Naive thymus-derived CD4-positive, alpha-beta T cell (primary cell): ENCODE measurements at regions of chr3 and their contacts with region 1.

Region 1: GRCh38 chr3:18411541-18411940 is 13.6 kb downstream of the SATB1 start:
- DNase-seq: peak in 7 of 9 donors; percentile 46 to 80 (median 68)
- ATAC-seq: peak; percentile 83
- H3K4me3 ChIP-seq: peak overlapping the region; percentile 9
- H3K4me3 Mint-ChIP-seq: peak overlapping the region; percentile 46 to 88 (median 76)
- H3K27ac ChIP-seq: peak overlapping the region; percentile 55
- H3K27ac Mint-ChIP-seq: peak overlapping the region; percentile 75 to 97 (median 86)
- H3K4me1 ChIP-seq: peaks cover 13 to 87% of the 10 kb centered on the region in 2 donors
- H3K4me1 Mint-ChIP-seq: peaks cover 35 to 98% (median 89%) of the 10 kb centered on the region in 7 donors
- H3K27me3 ChIP-seq: no peaks in the 10 kb centered on the region
- H3K27me3 Mint-ChIP-seq: no peaks in the 10 kb centered on the region

Region 2: DNA sequence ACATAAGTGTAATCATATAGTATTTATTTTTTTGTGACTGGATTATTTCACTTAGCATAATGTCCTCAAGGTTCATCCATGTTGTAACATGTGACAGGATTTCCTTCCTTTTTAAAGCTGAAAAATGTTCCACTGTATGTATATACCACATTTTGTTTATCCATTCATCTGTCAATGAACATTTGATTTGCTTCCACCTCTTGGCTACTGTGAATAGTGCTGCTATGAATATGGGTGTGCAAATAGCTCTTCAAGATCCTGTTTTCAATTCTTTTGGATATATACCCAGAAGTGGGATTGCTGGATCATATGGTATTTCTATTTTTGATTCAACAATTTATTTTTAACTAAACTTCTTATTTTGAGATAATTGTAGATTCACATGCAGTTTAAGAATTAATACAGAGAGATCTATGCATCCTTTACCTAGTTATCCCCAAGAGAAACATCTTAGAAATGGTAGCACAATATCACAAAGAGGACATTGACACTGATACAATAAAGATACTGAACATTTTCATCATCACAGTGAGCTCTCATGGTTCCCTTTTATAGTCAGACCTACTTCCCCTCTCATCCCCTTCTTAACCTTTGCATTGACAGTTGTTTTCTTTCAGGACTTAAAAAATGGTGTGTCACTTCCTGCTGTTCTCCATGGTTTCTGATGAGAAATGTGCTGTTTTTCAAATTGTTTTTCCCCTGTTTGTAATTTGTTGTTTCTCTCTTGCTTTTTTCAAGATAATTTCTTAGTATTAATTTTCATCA is 76.5 kb before region 1 on chr3:
- CTCF ChIA-PET with region 1: no interaction called
- POLR2A ChIA-PET with region 1: no interaction called
- intact Hi-C with region 1: no loop called
- DNase-seq: no peak
- ATAC-seq: peak; percentile 56
- H3K4me3 ChIP-seq: no peak overlapping the region
- H3K4me3 Mint-ChIP-seq: peak overlapping the region in 2 of 10 donors; percentile 1 to 9
- H3K27ac ChIP-seq: no peak overlapping the region
- H3K27ac Mint-ChIP-seq: peak overlapping the region in 2 of 9 donors; percentile 1 to 67
- H3K4me1 ChIP-seq: no peaks in the 10 kb centered on the region
- H3K4me1 Mint-ChIP-seq: peaks cover 11 to 24% (median 16%) of the 10 kb centered on the region in 7 donors
- H3K27me3 ChIP-seq: no peaks in the 10 kb centered on the region
- H3K27me3 Mint-ChIP-seq: no peaks in the 10 kb centered on the region

Region 3: DNA sequence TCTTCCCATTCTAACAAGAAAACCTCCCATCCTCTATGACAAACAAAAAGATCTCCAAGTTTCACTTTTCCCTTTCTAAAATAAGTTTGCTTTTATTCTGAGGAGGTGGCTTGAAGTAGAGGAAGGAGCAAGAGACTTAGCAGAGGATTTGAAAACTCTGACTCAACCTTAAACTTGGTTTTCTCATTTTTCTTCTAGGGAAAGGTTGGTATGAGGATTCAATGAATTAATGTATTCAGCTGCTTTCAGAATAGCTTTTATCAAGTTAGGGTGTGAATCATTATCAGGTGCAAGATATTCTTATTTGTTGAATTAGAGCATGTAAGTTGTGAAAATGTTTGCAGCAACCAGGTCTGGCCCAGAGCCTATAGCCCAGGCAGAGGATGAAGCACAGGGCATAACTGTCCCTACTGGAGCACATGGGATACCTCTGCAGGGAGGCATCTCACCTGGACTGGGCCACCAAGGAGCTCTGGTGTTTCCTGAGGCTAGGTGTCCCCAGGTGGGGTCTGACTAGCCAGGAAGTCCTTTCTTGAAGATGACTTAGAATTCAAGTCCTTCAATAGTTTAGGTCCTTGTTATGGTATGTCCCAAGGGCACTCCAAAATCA is 28.7 kb before region 1 on chr3:
- CTCF ChIA-PET with region 1: no interaction called
- POLR2A ChIA-PET with region 1: no interaction called
- intact Hi-C with region 1: no loop called
- DNase-seq: no peak
- ATAC-seq: peak; percentile 32
- H3K4me3 ChIP-seq: no peak overlapping the region
- H3K4me3 Mint-ChIP-seq: peak overlapping the region in 9 of 10 donors; percentile 4 to 74 (median 49)
- H3K27ac ChIP-seq: no peak overlapping the region
- H3K27ac Mint-ChIP-seq: peak overlapping the region; percentile 34 to 91 (median 51)
- H3K4me1 ChIP-seq: peaks cover 0 to 46% of the 10 kb centered on the region in 2 donors
- H3K4me1 Mint-ChIP-seq: peaks cover 19 to 94% (median 84%) of the 10 kb centered on the region in 7 donors
- H3K27me3 ChIP-seq: no peaks in the 10 kb centered on the region
- H3K27me3 Mint-ChIP-seq: no peaks in the 10 kb centered on the region

Region 4: GRCh38 chr3:18424729-18425640 is 13.4 kb after region 1 on chr3 and contains the start of gene SATB1:
- CTCF ChIA-PET with region 1: interaction called, 6 read pairs
- POLR2A ChIA-PET with region 1: interaction called, 206 read pairs
- intact Hi-C with region 1: loop called (anchors 1 kb)
- DNase-seq: peak; percentile 55 to 72 (median 67)
- ATAC-seq: peak; percentile 62
- H3K4me3 ChIP-seq: peak within 1 kb of the TSS; percentile 72
- H3K4me3 Mint-ChIP-seq: peak within 1 kb of the TSS; percentile 91 to 100 (median 98)
- H3K27ac ChIP-seq: peak within 1 kb of the TSS; percentile 97
- H3K27ac Mint-ChIP-seq: peak within 1 kb of the TSS; percentile 87 to 99 (median 98)
- H3K4me1 ChIP-seq: peaks cover 8 to 21% of the 10 kb centered on the region in 2 donors
- H3K4me1 Mint-ChIP-seq: peaks cover 41 to 72% (median 62%) of the 10 kb centered on the region in 7 donors
- H3K27me3 ChIP-seq: no peaks in the 10 kb centered on the region
- H3K27me3 Mint-ChIP-seq: peaks cover 0 to 2% (median 0%) of the 10 kb centered on the region in 5 donors
- total RNA-seq, gene SATB1: 258 to 482 (median 451) TPM